PC-3 (cell line): ENCODE measurements at regions of chr13 and their contacts with region 1.

Region 1: GRCh38 chr13:47499358-47500150 is 501.5 kb downstream of the SUCLA2 start:
- DNase-seq: peak; percentile 83
- ATAC-seq: peak; percentile 95
- H3K4me3 ChIP-seq: no peak overlapping the region
- H3K27ac ChIP-seq: peak overlapping the region; percentile 84
- H3K4me1 ChIP-seq: peaks cover 16% of the 10 kb centered on the region
- H3K27me3 ChIP-seq: no peaks in the 10 kb centered on the region
- CTCF ChIP-seq: no peak

Region 2: DNA sequence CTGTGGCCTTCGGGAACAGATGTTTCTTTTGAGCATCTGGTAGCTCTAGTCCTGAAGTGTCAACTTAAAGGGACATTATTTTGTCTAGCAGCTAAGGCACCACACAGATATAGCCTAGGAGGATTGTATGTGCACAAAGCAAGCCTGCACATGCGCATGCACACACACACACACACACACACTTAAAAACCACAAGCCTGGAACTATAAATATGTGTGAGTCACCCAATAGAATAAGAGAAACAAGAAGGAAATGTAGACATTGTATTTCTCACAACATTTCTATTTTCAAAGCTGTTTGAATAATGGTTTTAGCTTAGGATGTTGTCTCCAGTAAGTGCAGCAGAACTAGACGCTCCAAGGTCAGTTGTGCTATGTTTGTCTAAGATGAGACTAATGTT is 15.0 kb before region 1 on chr13:
- CTCF ChIA-PET with region 1: no interaction called
- POLR2A ChIA-PET with region 1: no interaction called
- intact Hi-C with region 1: loop called (anchors 1 kb)
- DNase-seq: peak; percentile 62
- ATAC-seq: peak; percentile 81
- H3K4me3 ChIP-seq: no peak overlapping the region
- H3K27ac ChIP-seq: peak overlapping the region; percentile 21; the same call in 1 of the 2 replicates
- H3K4me1 ChIP-seq: peaks cover 23% of the 10 kb centered on the region
- H3K27me3 ChIP-seq: no peaks in the 10 kb centered on the region
- CTCF ChIP-seq: no peak